Aorta (tissue), 5 donors: ENCODE measurements at regions of chr16 and their contacts with region 1.

Region 1: GRCh38 chr16:58025351-58026138 is at the start of gene MMP15:
- DNase-seq: peak; percentile 73 to 89
- ATAC-seq: peak; percentile 73
- H3K4me3 ChIP-seq: peak within 1 kb of the TSS; percentile 20 to 49
- H3K27ac ChIP-seq: peak within 1 kb of the TSS in 1 of 2 donors; percentile 14
- H3K4me1 ChIP-seq: no peaks in the 10 kb centered on the region
- H3K27me3 ChIP-seq: no peaks in the 10 kb centered on the region
- total RNA-seq, gene MMP15: 5.4 to 5.9 TPM

Region 2: GRCh38 chr16:57984331-57985203 is 41.0 kb before region 1 on chr16:
- intact Hi-C with region 1: no loop called
- DNase-seq: peak; percentile 90 to 93
- ATAC-seq: peak; percentile 92
- H3K4me3 ChIP-seq: peak overlapping the region in 1 of 2 donors; percentile 36
- H3K27ac ChIP-seq: no peak overlapping the region
- H3K4me1 ChIP-seq: no peaks in the 10 kb centered on the region
- H3K27me3 ChIP-seq: no peaks in the 10 kb centered on the region

Region 3: GRCh38 chr16:58077853-58078252 is 52.3 kb after region 1 on chr16:
- intact Hi-C with region 1: no loop called
- DNase-seq: no peak
- ATAC-seq: no peak
- H3K4me3 ChIP-seq: no peak overlapping the region
- H3K27ac ChIP-seq: no peak overlapping the region
- H3K4me1 ChIP-seq: no peaks in the 10 kb centered on the region
- H3K27me3 ChIP-seq: no peaks in the 10 kb centered on the region

Region 4: DNA sequence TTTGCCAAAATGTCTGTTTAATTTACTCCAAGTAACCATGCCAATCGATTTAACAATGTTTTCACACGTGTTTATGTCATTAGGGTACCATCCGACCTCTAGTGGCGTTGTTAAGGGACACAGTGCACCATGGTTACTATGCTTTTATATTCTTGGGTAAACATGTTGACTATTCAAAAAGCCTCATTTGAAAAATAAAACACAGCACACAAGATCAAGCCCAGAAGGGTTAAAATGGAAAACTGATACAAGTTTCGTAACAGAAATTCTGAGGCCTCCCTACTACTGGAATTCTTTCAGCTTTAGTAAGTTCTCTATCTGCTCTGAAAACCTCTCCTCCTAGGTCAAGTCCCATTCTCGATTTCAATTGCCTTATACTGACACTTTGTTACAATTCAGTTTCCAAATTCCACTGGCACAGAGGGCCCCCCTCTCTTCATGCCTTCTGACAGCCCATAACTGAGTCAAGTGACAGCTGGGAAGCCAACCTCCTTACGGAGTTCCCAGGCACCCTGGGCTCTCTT is 101.5 kb after region 1 on chr16:
- intact Hi-C with region 1: loop called (anchors 1 to 5 kb)
- DNase-seq: no peak
- ATAC-seq: no peak
- H3K4me3 ChIP-seq: peak overlapping the region in 1 of 2 donors; percentile 38
- H3K27ac ChIP-seq: no peak overlapping the region
- H3K4me1 ChIP-seq: peaks cover 0 to 6% of the 10 kb centered on the region in 2 donors
- H3K27me3 ChIP-seq: no peaks in the 10 kb centered on the region

Region 5: GRCh38 chr16:58198022-58198683 is 172.6 kb after region 1 on chr16 and contains the start of gene CSNK2A2:
- intact Hi-C with region 1: loop called (anchors 5 kb)
- DNase-seq: peak; percentile 78 to 90
- ATAC-seq: peak; percentile 89
- H3K4me3 ChIP-seq: peak within 1 kb of the TSS; percentile 93 to 99
- H3K27ac ChIP-seq: no peak within 1 kb of the TSS
- H3K4me1 ChIP-seq: peaks cover 0 to 2% of the 10 kb centered on the region in 2 donors
- H3K27me3 ChIP-seq: no peaks in the 10 kb centered on the region
- total RNA-seq, gene CSNK2A2: 42.5 to 56.8 TPM

Region 6: DNA sequence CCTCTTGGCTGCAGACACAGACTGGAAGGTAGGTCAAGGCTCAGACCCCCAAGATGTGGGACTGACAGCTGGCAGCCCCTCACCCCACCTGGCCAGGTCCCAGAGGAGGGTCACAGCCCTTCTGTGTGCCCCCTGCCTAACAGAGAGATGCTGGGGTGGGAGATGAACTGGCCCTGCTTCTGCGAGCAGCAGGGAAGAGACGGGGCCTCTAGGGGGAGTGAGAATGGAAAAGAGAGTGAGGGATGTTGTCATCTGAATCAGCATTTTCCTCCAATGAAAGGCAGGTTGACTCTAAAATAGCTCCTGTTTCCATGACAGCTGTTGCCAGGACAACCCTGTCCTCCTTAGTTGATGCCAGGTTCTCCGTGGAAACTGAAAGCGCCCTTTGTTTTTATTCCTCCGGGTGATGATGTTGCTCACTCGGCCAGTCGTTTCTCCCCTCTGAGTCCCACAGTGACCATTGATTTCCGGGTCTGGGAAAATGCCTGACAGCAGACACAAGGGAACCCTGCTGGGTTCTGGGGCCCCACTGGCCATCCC is 469.5 kb after region 1 on chr16:
- intact Hi-C with region 1: loop called in 1 of 2 experiments (anchors 10 kb)
- DNase-seq: peak; percentile 80 to 81
- ATAC-seq: peak; percentile 61
- H3K4me3 ChIP-seq: no peak overlapping the region
- H3K27ac ChIP-seq: no peak overlapping the region
- H3K4me1 ChIP-seq: no peaks in the 10 kb centered on the region
- H3K27me3 ChIP-seq: no peaks in the 10 kb centered on the region